Calu3 (cell line): ENCODE measurements at regions of chr7 and their contacts with region 1.

Region 1: DNA sequence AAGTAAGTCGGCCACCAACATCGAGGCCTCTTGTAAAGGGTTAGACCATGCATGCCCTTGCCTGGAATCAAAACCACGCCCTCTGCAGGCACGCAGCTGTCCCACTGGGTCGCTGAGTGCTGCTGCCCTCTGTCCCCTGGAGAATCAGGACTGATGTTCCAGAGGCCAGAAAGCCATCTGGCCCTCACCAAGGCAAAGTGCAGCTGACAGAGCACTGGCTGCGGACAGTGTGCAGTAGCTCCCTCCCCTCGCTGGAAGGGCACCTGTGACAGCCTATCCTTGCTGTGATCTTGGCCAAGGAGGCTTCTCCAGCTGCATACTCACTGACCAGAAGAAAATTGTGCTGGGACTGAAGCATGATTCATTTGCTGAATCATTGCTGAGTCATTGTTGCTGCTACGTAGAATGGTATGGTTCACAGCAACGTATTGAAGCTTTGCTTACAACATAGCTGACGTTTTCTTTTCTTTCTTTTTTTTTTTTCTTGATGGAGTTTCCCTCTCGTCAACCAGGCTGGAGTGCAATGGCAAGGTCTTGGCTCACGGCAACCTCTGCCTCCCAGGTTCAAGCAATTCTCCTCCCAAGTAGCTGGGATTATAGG is 30.4 kb downstream of the DDC start:
- DNase-seq: peak; percentile 69
- H3K4me3 Mint-ChIP-seq: peak overlapping the region; percentile 41
- H3K27ac Mint-ChIP-seq: peak overlapping the region; percentile 89
- H3K4me1 Mint-ChIP-seq: peaks cover 49% of the 10 kb centered on the region
- H3K27me3 Mint-ChIP-seq: no peaks in the 10 kb centered on the region
- CTCF ChIP-seq: no peak

Region 2: GRCh38 chr7:50467817-50468610 is 66.8 kb before region 1 on chr7:
- CTCF ChIA-PET with region 1: interaction called, 7 read pairs
- intact Hi-C with region 1: loop called (anchors 2 kb)
- DNase-seq: peak; percentile 93
- H3K4me3 Mint-ChIP-seq: peak overlapping the region; percentile 25
- H3K27ac Mint-ChIP-seq: peak overlapping the region; percentile 13
- H3K4me1 Mint-ChIP-seq: no peaks in the 10 kb centered on the region
- H3K27me3 Mint-ChIP-seq: no peaks in the 10 kb centered on the region
- CTCF ChIP-seq: peak; percentile 96

Region 3: GRCh38 chr7:50584914-50585361 is 50.1 kb after region 1 on chr7:
- CTCF ChIA-PET with region 1: no interaction called
- intact Hi-C with region 1: loop called (anchors 1 kb)
- DNase-seq: peak; percentile 81
- H3K4me3 Mint-ChIP-seq: no peak overlapping the region
- H3K27ac Mint-ChIP-seq: peak overlapping the region; percentile 32
- H3K4me1 Mint-ChIP-seq: no peaks in the 10 kb centered on the region
- H3K27me3 Mint-ChIP-seq: no peaks in the 10 kb centered on the region
- CTCF ChIP-seq: no peak

Region 4: DNA sequence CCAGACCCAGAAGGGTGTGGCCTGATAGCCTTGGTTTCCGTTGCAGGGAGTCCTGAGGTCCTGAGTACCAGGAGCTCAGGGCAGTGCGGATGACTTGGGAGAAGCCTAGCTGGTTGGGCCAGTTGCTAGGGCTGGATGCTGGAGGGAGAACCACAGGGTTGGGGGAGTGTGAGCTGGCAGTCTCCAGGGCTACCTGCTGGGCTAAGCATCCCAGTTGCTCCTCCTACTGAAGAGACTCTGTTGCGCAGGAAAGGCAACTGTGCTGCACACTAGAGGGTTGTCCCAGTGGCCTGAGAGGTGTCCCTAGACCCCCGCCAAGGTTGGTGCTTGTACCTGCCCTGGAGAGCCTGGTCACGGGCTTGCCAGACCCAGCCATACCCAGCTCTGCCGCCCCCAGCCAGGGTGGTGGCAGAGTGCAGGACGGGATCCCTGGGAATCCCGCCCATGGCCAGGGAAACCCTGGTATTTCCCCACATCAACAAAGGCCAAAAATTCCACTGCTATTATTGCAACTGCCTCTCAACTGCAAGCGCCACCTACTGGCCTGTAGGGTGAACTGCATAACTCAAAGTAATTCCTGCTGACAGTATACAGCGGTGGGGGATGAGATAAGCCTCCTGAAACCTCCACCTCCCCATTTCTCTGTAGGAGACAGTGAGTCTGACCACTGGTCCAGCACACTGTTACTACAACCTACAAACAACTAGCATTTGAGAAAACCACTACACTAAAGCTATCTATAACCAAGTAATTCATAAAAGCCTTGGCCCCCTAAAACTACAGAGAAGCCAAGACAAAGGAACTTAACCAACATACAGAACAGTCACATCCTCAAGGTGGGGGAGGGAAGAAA is 98.0 kb after region 1 on chr7:
- CTCF ChIA-PET with region 1: interaction called, 5 read pairs
- intact Hi-C with region 1: loop called (anchors 5 kb)
- DNase-seq: peak; percentile 80
- H3K4me3 Mint-ChIP-seq: no peak overlapping the region
- H3K27ac Mint-ChIP-seq: peak overlapping the region; percentile 23
- H3K4me1 Mint-ChIP-seq: peaks cover 26% of the 10 kb centered on the region
- H3K27me3 Mint-ChIP-seq: no peaks in the 10 kb centered on the region
- CTCF ChIP-seq: peak; percentile 98

Region 5: GRCh38 chr7:51350200-51350921 is 815.6 kb after region 1 on chr7:
- CTCF ChIA-PET with region 1: no interaction called
- intact Hi-C with region 1: loop called (anchors 10 kb)
- DNase-seq: peak; percentile 79
- H3K4me3 Mint-ChIP-seq: peak overlapping the region; percentile 45
- H3K27ac Mint-ChIP-seq: peak overlapping the region; percentile 89
- H3K4me1 Mint-ChIP-seq: peaks cover 39% of the 10 kb centered on the region
- H3K27me3 Mint-ChIP-seq: no peaks in the 10 kb centered on the region
- CTCF ChIP-seq: no peak